Activated CD4-positive, alpha-beta memory T cell treated with anti-CD3 and anti-CD28 coated beads for 36 hours (primary cell): ENCODE measurements at regions of chr5 and their contacts with region 1.

Region 1: DNA sequence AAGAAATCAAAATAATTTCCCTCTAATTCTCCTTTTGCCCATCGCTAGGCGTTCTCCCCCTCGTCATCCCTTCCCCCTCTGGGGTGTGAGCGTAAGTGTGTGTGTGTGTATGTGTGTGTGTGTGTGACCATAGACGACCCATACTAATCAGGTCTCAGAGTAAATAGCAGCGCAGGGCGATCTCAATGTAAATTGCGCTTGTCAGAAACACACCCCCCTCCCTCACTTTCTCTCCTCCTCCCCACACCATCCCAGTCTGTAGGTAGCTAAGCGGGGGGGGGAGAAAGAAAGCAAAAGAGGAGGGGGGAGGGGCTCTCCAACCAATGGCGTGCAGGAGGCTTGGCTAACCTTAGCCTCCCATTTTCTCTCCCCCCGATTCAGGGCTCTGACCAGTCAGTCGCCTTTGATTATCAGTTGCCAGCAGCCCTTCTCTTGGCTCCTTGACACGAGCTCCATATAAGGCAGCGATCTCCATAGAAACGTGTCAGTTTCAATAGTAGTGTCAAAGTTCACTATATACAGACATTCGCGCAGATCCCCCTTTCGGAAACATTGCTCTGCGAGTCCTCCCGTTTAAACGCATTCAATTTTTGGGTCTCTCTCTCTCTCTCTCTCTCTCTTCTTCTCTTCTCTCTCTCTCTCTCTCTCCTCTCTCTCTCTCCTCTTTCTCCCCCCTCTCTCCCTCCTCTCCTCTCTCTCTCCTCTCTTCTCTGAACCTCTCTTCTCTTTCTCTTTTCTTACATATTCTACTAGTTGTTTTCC is at the start of gene NR2F1:
- DNase-seq: no peak
- H3K4me3 Mint-ChIP-seq: no peak within 1 kb of the TSS
- H3K27ac Mint-ChIP-seq: no peak within 1 kb of the TSS
- H3K4me1 Mint-ChIP-seq: peaks cover 27% of the 10 kb centered on the region
- H3K27me3 Mint-ChIP-seq: peaks cover 44% of the 10 kb centered on the region
- total RNA-seq, gene NR2F1: not detected

Region 2: DNA sequence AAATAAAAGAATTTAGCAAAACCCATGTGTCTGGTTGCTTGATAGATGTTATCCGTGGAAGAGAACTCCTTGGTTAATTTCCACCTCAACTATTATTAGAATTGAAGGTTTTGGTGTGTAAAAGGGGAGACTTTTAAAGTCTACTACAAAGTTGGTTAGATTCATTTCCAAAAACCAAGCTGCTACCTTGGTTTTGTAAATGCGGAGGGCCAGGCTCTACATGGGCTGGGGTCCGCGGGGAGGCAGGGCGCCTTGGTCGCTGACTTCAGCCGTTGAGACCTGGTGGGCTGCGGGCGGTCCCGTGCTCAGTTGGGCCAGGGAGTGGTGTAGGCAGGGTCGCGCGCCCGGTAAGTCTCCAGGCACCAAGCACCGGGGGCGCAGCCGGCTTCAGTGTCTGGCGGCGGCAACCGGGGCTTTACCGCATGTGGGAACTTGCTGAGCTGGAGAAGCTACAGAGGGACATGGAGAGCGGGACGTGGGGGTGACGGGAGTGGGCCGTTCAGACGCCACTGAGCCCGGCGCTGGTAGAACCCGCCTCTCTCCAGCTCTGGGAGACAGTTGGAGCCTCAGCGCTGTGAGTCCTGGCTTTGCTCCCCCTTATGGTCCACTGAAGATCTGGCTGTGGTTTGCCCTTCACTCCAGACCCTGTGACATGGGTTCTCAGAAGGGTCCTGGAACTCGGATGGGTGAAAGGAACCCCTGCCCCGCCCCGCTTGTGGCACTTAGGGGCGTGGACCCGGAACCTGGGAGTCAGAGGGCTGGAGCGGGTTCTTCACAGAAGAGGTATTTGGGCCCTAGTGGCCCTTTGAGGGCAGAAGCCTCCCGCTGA is 11.9 kb after region 1 on chr5:
- CTCF ChIA-PET with region 1: interaction called, 3 read pairs
- POLR2A ChIA-PET with region 1: no interaction called
- intact Hi-C with region 1: loop called (anchors 1 kb)
- DNase-seq: no peak
- H3K4me3 Mint-ChIP-seq: no peak overlapping the region
- H3K27ac Mint-ChIP-seq: no peak overlapping the region
- H3K4me1 Mint-ChIP-seq: peaks cover 11% of the 10 kb centered on the region
- H3K27me3 Mint-ChIP-seq: peaks cover 64% of the 10 kb centered on the region

Region 3: DNA sequence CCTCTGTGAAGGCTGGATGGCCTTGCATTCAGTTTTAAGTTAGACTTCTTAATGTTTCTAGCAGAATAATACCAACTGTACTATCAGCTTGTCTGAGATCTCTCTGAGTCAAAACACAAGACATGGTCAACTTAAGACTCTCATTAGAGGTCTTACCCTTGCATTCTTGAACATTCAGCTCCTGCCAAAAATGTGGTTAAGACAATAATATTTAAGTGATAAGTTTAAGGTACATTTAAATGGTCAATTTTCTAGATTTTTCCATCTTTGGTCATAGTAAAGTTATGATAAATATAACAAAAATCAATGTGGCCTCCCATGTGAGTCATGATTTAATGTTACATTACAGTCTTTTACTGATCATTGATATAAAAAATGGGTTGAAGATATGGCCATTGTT is 75.2 kb after region 1 on chr5:
- CTCF ChIA-PET with region 1: no interaction called
- POLR2A ChIA-PET with region 1: no interaction called
- intact Hi-C with region 1: no loop called
- DNase-seq: no peak
- H3K4me3 Mint-ChIP-seq: no peak overlapping the region
- H3K27ac Mint-ChIP-seq: no peak overlapping the region
- H3K4me1 Mint-ChIP-seq: no peaks in the 10 kb centered on the region
- H3K27me3 Mint-ChIP-seq: no peaks in the 10 kb centered on the region

Region 4: GRCh38 chr5:93800988-93801811 is 218.3 kb after region 1 on chr5:
- CTCF ChIA-PET with region 1: interaction called, 9 read pairs
- POLR2A ChIA-PET with region 1: no interaction called
- intact Hi-C with region 1: loop called (anchors 1 kb)
- DNase-seq: no peak
- H3K4me3 Mint-ChIP-seq: no peak overlapping the region
- H3K27ac Mint-ChIP-seq: no peak overlapping the region
- H3K4me1 Mint-ChIP-seq: no peaks in the 10 kb centered on the region
- H3K27me3 Mint-ChIP-seq: no peaks in the 10 kb centered on the region

Region 5: DNA sequence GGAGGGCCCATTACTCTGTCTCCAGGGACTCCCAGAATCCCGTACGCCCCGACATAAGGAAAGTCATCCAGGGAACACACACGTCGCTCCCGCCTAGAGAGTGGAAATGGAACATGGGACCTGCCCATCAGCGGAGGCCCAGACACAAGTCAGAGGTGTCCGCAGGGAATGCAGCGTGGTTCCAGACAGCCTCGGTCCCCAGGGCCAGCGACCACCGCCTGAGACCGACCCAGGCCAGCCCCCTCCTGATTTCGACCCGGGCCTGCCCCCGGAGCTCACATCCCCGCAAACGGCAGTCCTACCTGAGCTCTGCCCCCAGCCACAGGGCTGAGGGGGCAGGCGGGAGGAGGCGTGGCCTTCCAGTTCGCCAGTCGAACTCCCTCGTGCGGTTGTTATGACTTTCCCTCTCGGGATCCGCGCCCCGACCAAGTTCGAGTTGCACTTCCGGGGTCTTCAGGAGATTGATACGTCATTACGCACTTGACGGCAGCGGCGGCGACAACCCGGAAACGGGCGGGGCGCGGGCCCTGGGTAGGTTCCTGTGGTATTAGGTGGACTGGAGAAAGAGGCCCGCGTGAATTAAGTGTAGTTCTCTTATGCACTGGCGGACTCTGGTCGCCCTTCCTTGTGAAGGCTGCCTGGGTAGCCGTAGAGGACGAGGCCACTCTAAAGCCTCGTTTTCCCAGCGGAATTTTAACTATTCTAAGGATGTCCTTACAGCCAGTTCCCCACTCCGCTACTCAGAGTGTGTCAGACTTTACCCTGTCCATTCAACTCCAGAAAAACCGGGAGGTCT is 528.5 kb after region 1 on chr5:
- CTCF ChIA-PET with region 1: no interaction called
- POLR2A ChIA-PET with region 1: no interaction called
- intact Hi-C with region 1: loop called (anchors 2 kb)
- DNase-seq: peak; percentile 96
- H3K4me3 Mint-ChIP-seq: peak overlapping the region; percentile 92
- H3K27ac Mint-ChIP-seq: peak overlapping the region; percentile 85
- H3K4me1 Mint-ChIP-seq: peaks cover 26% of the 10 kb centered on the region
- H3K27me3 Mint-ChIP-seq: no peaks in the 10 kb centered on the region

Region 6: DNA sequence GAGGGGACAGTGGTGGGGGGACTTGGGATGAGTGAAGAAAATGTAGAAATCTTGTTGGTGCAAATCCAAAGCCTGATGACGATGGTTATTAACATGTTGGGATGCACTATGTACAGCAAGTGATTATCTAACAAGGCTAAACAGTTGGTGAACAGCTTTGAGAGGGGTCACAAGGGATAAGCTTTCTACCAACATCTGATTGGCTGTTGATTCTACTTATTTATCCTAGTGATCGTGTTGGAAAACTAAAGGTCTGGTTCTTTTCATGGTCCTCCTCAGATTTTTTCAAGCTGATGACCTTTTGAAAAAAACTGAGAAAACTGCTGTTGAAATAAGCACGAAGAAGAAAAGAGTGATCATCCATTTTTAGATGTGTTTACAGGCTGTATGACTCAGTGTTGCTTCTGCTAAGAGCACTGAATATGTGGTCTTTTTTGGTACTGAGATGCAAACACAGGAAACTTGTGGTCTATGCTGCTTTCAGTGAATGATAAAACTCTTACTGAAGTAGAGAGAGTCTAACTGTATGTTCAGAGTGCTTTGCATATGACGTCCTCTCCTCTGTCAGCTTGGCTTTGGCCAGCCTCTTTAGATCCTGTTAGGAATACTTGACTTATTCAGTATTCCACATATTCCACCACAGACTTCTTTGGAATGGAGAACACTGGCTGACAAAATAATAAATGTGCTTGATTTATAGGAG is 1210.4 kb after region 1 on chr5:
- CTCF ChIA-PET with region 1: no interaction called
- POLR2A ChIA-PET with region 1: no interaction called
- intact Hi-C with region 1: loop called (anchors 10 kb)
- DNase-seq: peak; percentile 25
- H3K4me3 Mint-ChIP-seq: peak overlapping the region; percentile 39
- H3K27ac Mint-ChIP-seq: peak overlapping the region; percentile 84
- H3K4me1 Mint-ChIP-seq: peaks cover 35% of the 10 kb centered on the region
- H3K27me3 Mint-ChIP-seq: peaks cover 2% of the 10 kb centered on the region